Caco-2 (cell line): ENCODE measurements at regions of chr2 and their contacts with region 1.

Region 1: GRCh38 chr2:109715313-109715805 is 78.7 kb upstream of the RGPD5 start:
- DNase-seq: peak; percentile 68 to 71
- H3K4me3 ChIP-seq: no peak overlapping the region
- H3K4me3 Mint-ChIP-seq: no peak overlapping the region
- H3K27ac Mint-ChIP-seq: no peak overlapping the region
- H3K4me1 ChIP-seq: peaks cover 25% of the 10 kb centered on the region
- H3K4me1 Mint-ChIP-seq: peaks cover 19% of the 10 kb centered on the region
- H3K27me3 ChIP-seq: no peaks in the 10 kb centered on the region
- H3K27me3 Mint-ChIP-seq: no peaks in the 10 kb centered on the region
- CTCF ChIP-seq: peak; percentile 72 to 82

Region 2: DNA sequence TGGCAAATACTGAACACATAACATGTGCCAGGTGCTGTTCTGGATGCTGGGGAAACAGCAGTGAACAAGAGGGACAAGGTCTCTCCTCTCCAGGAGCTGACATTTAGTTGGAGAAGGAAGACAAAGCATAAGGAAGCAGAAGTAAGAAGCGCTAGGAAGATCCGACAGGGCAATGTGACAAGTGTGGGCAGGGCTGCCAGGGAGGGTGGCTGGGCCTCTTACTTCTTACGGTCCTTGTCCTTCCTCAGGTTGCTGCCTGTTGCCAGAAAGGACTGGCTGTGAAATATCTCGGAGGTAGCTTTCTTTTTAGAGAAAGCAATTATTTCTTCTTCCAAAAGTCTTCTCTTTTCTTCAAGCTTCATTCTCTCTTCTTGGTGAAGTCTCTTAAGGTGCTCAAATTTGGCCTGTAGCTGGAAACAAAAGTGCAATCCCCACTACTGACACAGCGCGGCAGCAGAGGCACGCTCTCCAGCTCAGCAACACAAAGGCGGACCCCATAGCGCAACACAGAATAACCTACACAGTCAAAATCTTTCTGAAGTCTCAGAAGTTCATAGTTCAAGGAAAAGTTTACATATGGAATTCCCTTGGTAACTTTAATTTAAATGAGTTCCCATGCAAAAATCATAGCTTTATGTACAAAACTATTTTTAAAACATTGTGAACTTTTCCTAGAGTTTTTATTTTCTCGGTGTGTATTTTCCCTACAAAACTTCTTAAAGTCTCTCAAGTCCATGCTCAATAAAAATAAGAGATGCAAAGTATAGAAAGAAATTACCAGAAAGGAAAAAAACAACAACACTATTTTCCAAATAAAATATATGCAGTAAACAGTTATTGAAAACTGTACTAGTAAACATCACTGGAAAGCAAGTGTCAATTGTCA is 169.3 kb before region 1 on chr2:
- CTCF ChIA-PET with region 1: interaction called, 37 read pairs
- POLR2A ChIA-PET with region 1: no interaction called
- intact Hi-C with region 1: loop called (anchors 1 kb)
- DNase-seq: peak; percentile 60 to 81
- H3K4me3 ChIP-seq: no peak overlapping the region
- H3K4me3 Mint-ChIP-seq: no peak overlapping the region
- H3K27ac Mint-ChIP-seq: no peak overlapping the region
- H3K4me1 ChIP-seq: peaks cover 8% of the 10 kb centered on the region; the same call in 1 of the 2 replicates
- H3K4me1 Mint-ChIP-seq: peaks cover 4% of the 10 kb centered on the region
- H3K27me3 ChIP-seq: no peaks in the 10 kb centered on the region
- H3K27me3 Mint-ChIP-seq: no peaks in the 10 kb centered on the region
- CTCF ChIP-seq: peak; percentile 94 to 97

Region 3: DNA sequence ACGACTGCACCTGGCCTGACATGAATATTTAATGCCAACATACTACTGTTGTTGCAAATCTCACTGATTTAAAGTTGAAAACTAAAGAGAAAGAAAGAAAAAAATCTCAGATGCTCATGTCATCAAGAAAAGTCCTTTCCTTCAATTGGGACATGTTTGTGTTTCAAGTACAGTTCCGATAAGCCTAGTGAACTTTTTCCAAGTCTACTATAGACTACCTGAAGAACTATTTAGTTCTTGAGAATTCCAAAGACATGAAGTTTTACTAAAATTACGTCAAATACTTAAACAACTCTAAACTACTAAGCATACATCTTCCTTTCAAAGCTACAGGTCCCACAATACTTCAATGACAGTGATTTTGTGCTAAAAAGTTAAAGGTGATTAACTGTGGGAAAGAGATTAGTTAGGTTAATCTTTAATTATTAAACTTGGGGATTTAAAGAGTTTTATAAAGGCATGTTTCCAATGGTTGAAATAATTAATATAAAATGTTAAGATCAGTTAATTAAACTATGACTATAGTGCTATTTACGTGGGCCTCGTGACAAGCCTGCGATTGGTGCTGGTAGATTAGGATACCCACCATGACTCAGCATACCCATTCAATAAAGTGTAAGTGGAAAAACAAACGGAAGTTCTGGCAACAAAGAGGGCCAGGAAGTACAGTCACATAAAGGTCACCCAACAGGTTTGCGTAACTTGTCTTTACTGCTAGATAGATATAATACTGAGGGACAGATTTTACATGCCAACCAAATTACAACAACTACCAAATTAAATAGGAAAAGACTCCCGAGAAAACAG is 157.1 kb before region 1 on chr2:
- CTCF ChIA-PET with region 1: no interaction called
- POLR2A ChIA-PET with region 1: no interaction called
- intact Hi-C with region 1: no loop called
- DNase-seq: peak; percentile 63 to 65
- H3K4me3 ChIP-seq: no peak overlapping the region
- H3K4me3 Mint-ChIP-seq: no peak overlapping the region
- H3K27ac Mint-ChIP-seq: peak overlapping the region; percentile 7
- H3K4me1 ChIP-seq: peaks cover 40% of the 10 kb centered on the region
- H3K4me1 Mint-ChIP-seq: peaks cover 34% of the 10 kb centered on the region
- H3K27me3 ChIP-seq: no peaks in the 10 kb centered on the region
- H3K27me3 Mint-ChIP-seq: no peaks in the 10 kb centered on the region
- CTCF ChIP-seq: no peak

Region 4: GRCh38 chr2:109637749-109638570 is 77.4 kb before region 1 on chr2:
- CTCF ChIA-PET with region 1: no interaction called
- POLR2A ChIA-PET with region 1: no interaction called
- intact Hi-C with region 1: no loop called
- DNase-seq: no peak
- H3K4me3 ChIP-seq: no peak overlapping the region
- H3K4me3 Mint-ChIP-seq: no peak overlapping the region
- H3K27ac Mint-ChIP-seq: no peak overlapping the region
- H3K4me1 ChIP-seq: peaks cover 18% of the 10 kb centered on the region
- H3K4me1 Mint-ChIP-seq: peaks cover 15% of the 10 kb centered on the region
- H3K27me3 ChIP-seq: no peaks in the 10 kb centered on the region
- H3K27me3 Mint-ChIP-seq: no peaks in the 10 kb centered on the region
- CTCF ChIP-seq: no peak

Region 5: DNA sequence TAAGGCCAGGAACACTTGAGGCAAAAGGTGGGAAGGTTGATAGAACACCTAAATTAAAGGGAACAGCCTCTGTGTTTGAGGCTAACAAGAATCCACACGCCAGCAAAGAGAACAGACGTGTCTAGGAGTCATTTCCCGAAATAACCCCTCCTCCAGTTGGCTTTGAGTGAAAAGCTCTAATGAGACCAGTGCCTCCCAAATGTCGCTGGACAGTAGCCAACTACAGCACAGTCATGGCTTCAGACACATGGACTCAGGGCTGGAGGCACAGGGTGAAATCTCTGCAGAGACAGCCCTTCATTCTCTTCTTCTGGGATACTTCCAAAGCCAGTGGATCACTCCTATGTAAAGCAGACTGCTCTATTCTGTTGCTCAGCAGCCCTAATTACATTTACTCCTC is 51.6 kb before region 1 on chr2:
- CTCF ChIA-PET with region 1: interaction called, 12 read pairs
- POLR2A ChIA-PET with region 1: no interaction called
- intact Hi-C with region 1: loop called (anchors 1 kb)
- DNase-seq: no peak
- H3K4me3 ChIP-seq: no peak overlapping the region
- H3K4me3 Mint-ChIP-seq: no peak overlapping the region
- H3K27ac Mint-ChIP-seq: no peak overlapping the region
- H3K4me1 ChIP-seq: peaks cover 13% of the 10 kb centered on the region
- H3K4me1 Mint-ChIP-seq: peaks cover 13% of the 10 kb centered on the region
- H3K27me3 ChIP-seq: no peaks in the 10 kb centered on the region
- H3K27me3 Mint-ChIP-seq: no peaks in the 10 kb centered on the region
- CTCF ChIP-seq: no peak

Region 6: GRCh38 chr2:109690822-109691547 is 24.4 kb before region 1 on chr2:
- CTCF ChIA-PET with region 1: interaction called, 7 read pairs
- POLR2A ChIA-PET with region 1: no interaction called
- intact Hi-C with region 1: loop called (anchors 1 kb)
- DNase-seq: peak; percentile 94 to 95
- H3K4me3 ChIP-seq: no peak overlapping the region
- H3K4me3 Mint-ChIP-seq: peak overlapping the region; percentile 59
- H3K27ac Mint-ChIP-seq: peak overlapping the region; percentile 86
- H3K4me1 ChIP-seq: peaks cover 61% of the 10 kb centered on the region
- H3K4me1 Mint-ChIP-seq: peaks cover 61% of the 10 kb centered on the region
- H3K27me3 ChIP-seq: no peaks in the 10 kb centered on the region
- H3K27me3 Mint-ChIP-seq: no peaks in the 10 kb centered on the region
- CTCF ChIP-seq: no peak

Region 7: DNA sequence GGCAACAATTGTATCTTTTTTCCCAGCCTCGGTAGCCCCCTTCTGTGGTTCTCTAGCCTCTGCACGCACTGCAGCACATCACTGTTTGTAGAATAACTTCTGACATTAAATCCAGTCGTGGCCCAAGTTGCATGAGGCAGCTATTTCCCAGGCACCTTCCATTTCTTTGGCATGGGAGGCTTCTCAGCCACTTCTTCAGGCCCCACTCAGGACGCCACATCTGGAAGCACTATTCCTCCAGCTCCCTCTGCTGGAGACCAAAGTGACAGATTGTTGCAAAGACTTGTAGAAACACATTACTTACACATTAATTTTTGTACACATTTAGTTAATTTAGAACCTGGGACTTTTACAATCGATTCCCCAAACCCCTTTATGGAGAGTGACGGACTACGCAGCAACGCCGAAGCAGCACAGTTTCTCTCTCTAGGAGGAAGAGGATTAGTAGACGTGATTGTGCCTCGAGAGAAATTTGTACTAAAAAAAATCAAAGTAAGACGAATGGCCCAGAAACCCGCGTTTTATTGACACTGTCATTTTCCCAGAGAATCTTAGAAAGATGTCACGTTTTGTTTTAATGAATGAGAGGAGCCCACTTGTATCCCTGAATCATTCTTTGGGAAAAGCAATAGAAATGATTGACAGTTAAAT is 20.9 kb after region 1 on chr2:
- CTCF ChIA-PET with region 1: interaction called, 3 read pairs
- POLR2A ChIA-PET with region 1: no interaction called
- intact Hi-C with region 1: loop called (anchors 1 kb)
- DNase-seq: peak; percentile 72 to 79
- H3K4me3 ChIP-seq: no peak overlapping the region
- H3K4me3 Mint-ChIP-seq: no peak overlapping the region
- H3K27ac Mint-ChIP-seq: no peak overlapping the region
- H3K4me1 ChIP-seq: 0 out of 2 replicates have a peak, but pooled peaks cover 3% of the 10 kb centered on the region
- H3K4me1 Mint-ChIP-seq: peaks cover 6% of the 10 kb centered on the region
- H3K27me3 ChIP-seq: no peaks in the 10 kb centered on the region
- H3K27me3 Mint-ChIP-seq: no peaks in the 10 kb centered on the region
- CTCF ChIP-seq: peak; percentile 70 to 89